ENCODE measurements at regions of chr1 and their contacts with region 1.

Region 1: GRCh38 chr1:89987170-89987819 is 7.6 kb upstream of the ZNF326 start:
- DNase-seq: peak in 1 of 2 donors; percentile 84
- ATAC-seq: peak; percentile 87 to 97 (median 95)
- H3K4me3 ChIP-seq: no peak overlapping the region
- H3K4me3 Mint-ChIP-seq: no peak overlapping the region
- H3K27ac ChIP-seq: no peak overlapping the region
- H3K27ac Mint-ChIP-seq: no peak overlapping the region
- H3K4me1 ChIP-seq: no peaks in the 10 kb centered on the region
- H3K4me1 Mint-ChIP-seq: no peaks in the 10 kb centered on the region
- H3K27me3 ChIP-seq: no peaks in the 10 kb centered on the region
- H3K27me3 Mint-ChIP-seq: peaks cover 0 to 3% of the 10 kb centered on the region in 2 donors
- CTCF ChIP-seq: peak; percentile 93

Region 2: DNA sequence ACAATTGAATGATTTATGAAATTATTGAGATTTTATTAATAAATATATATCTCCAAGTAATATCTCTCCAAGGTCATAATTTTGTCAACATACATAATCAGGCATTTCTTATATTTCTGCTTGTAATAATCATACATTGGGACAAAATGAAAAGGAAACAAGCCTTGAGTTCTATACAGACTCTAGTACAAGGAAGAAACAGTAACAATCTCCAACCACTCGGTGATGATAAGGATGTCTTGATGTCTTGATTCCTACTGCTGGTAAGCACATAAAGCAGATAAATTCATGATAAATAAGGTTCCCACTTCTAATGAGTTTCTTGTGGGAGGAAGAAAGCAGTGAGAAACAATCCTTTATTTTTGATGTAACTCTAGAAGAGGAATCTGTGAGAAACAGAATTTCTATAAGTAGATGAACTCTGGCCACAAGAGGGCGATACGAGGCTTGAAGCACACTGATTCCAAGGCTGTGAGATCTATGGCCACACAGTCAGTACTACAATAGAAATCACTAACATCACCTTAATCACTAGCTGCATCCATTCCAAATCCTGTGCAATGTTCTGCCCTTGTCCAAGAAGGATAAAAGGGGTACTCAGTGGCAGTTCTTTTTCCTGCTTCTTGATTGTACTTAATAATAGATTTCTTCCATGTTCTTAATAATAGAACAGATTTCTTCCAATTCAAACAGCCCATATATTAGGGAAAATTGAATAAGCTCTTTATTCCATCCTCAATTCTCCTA is 504.1 kb before region 1 on chr1:
- intact Hi-C with region 1: loop called (anchors 1 kb)
- DNase-seq: peak; percentile 48 to 88
- ATAC-seq: peak; percentile 84 to 95 (median 93)
- H3K4me3 ChIP-seq: no peak overlapping the region
- H3K4me3 Mint-ChIP-seq: no peak overlapping the region
- H3K27ac ChIP-seq: no peak overlapping the region
- H3K27ac Mint-ChIP-seq: no peak overlapping the region
- H3K4me1 ChIP-seq: no peaks in the 10 kb centered on the region
- H3K4me1 Mint-ChIP-seq: peaks cover 0 to 3% of the 10 kb centered on the region in 2 donors
- H3K27me3 ChIP-seq: peaks cover 3% of the 10 kb centered on the region
- H3K27me3 Mint-ChIP-seq: peaks cover 4 to 8% of the 10 kb centered on the region in 2 donors
- CTCF ChIP-seq: peak; percentile 88

Region 3: DNA sequence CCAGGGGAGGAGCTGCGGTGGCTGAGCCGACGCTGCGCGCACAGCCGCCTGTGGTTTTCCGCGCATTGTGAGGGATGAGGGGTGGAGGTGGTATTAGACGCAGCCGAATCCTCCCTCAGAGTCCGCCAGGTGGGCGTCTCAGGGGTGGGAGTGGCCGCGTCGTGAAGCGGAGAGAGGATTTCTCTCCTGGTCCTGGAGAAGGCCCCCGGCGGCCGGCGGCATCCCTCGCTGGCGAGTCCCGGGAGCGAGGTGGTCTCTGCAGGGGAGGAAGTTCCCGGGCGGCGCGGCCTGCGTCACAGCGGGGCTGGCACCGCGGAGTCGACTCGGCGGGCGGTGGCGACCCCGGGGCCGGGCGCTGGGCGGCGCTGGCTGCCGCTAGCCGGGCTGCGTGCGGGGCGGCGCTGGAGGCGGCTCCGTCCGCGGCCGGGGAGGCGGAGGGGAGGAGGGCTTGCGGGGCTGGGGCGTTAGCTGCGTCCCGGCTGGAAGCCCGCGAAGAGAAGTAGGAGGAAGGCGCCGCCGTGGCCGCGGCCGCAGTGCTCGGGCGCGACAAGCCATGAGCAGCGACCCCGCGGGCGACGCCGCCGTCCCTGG is 354.5 kb before region 1 on chr1 and contains the start of gene LRRC8C:
- intact Hi-C with region 1: loop called (anchors 10 kb)
- DNase-seq: peak; percentile 89 to 92
- ATAC-seq: peak; percentile 87 to 93 (median 88)
- H3K4me3 ChIP-seq: peak within 1 kb of the TSS; percentile 91
- H3K4me3 Mint-ChIP-seq: peak within 1 kb of the TSS; percentile 95
- H3K27ac ChIP-seq: peak within 1 kb of the TSS; percentile 88
- H3K27ac Mint-ChIP-seq: peak within 1 kb of the TSS; percentile 92 to 99
- H3K4me1 ChIP-seq: peaks cover 19% of the 10 kb centered on the region
- H3K4me1 Mint-ChIP-seq: peaks cover 45 to 56% of the 10 kb centered on the region in 2 donors
- H3K27me3 ChIP-seq: no peaks in the 10 kb centered on the region
- H3K27me3 Mint-ChIP-seq: no peaks in the 10 kb centered on the region
- CTCF ChIP-seq: peak; percentile 48
- total RNA-seq, gene LRRC8C: 7.6 to 19.1 (median 15.1) TPM

Region 4: DNA sequence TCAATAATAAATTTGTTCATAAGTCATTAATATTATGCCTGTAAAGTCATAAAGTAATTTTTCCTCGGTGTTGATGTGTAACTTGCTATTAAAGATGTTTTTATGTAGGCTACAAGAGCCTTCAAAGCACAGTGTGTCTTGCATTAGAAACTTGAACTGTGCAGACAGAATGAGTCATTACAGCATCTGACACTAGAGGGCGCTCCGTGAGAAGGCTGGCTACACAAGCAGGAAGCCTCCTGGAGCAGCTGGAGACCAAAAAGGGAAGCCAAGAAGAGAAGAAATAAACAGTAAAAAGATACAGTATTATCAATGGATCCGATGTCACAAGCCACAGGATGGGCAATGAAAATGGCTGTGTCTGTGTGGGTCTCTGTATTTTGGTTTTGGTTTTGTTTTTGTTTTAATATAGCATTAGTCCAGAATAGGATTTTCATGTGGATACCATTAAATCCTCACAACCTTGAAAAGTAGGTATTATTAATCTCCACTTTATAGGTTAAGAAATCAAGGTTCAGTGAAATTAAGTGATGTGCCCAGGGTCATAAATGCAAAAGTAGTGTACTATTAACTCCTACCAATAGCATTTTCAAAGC is 182.6 kb before region 1 on chr1:
- intact Hi-C with region 1: loop called (anchors 1 kb)
- DNase-seq: peak; percentile 70 to 90
- ATAC-seq: peak; percentile 88 to 97 (median 94)
- H3K4me3 ChIP-seq: no peak overlapping the region
- H3K4me3 Mint-ChIP-seq: no peak overlapping the region
- H3K27ac ChIP-seq: no peak overlapping the region
- H3K27ac Mint-ChIP-seq: no peak overlapping the region
- H3K4me1 ChIP-seq: no peaks in the 10 kb centered on the region
- H3K4me1 Mint-ChIP-seq: peaks cover 0 to 2% of the 10 kb centered on the region in 2 donors
- H3K27me3 ChIP-seq: no peaks in the 10 kb centered on the region
- H3K27me3 Mint-ChIP-seq: peaks cover 3 to 6% of the 10 kb centered on the region in 2 donors
- CTCF ChIP-seq: peak; percentile 87

Region 5: DNA sequence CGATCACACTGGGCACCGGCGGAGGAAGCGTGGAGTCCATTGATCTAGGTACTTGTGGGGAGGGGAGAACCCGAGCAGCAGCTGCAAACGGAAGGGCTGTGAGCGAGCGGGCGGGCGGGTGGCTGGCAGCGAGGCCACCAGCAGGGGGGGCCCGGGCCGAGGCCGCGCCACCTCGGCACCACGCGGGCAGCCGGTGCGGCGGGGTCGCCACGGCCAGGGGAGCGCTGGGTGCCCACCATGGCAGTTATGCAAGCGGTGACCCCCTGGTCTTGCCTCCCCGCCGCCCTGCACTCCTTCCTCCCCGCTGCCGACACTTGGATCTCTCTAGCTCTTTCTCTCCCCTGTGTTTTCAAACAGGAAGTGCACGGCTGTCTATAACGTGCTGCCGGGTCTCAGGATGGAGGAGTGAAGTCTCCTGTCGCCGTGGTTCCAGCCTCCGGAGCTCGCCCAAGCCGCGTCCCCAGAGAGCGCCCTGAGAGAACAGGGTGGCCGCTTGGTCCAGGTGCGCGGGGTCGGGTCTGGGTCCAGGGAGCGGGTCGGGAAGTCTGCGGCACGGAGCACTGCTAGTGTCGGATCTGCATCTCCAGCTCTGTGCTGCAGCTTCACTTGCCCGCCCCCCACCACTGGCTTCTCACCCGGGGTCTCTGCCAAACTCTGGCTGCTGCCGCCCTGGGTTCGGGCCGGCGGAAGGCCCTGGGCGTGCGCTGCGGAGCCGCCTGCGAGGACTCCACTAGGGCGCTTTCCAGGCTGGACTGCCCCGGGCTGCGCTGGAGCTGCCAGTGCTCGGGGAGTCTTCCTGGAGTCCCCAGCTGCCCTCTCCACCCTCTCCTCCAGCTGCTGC is 143.8 kb before region 1 on chr1:
- intact Hi-C with region 1: loop called (anchors 1 kb)
- DNase-seq: peak; percentile 65 to 88
- ATAC-seq: peak; percentile 94 to 95 (median 95)
- H3K4me3 ChIP-seq: peak overlapping the region; percentile 80
- H3K4me3 Mint-ChIP-seq: peak overlapping the region; percentile 94
- H3K27ac ChIP-seq: peak overlapping the region; percentile 63
- H3K27ac Mint-ChIP-seq: peak overlapping the region; percentile 73 to 94
- H3K4me1 ChIP-seq: peaks cover 10% of the 10 kb centered on the region
- H3K4me1 Mint-ChIP-seq: peaks cover 36 to 40% of the 10 kb centered on the region in 2 donors
- H3K27me3 ChIP-seq: no peaks in the 10 kb centered on the region
- H3K27me3 Mint-ChIP-seq: no peaks in the 10 kb centered on the region
- CTCF ChIP-seq: peak; percentile 79